HCT116 (cell line): ENCODE measurements at regions of chr16 and their contacts with region 1.

Region 1: GRCh38 chr16:85759631-85760419 is 8.9 kb upstream of the C16orf74 start:
- DNase-seq: no peak
- ATAC-seq: peak; percentile 97
- H3K4me3 ChIP-seq: no peak overlapping the region
- H3K27ac ChIP-seq: no peak overlapping the region
- H3K4me1 ChIP-seq: peaks cover 0 to 11% of the 10 kb centered on the region in 2 experiments; a peak in 1 of 4 replicates
- H3K27me3 ChIP-seq: peaks cover 6% of the 10 kb centered on the region; the same call in 1 of the 2 replicates
- CTCF ChIP-seq: peak; percentile 93 to 96 (median 94)
- POLR2A ChIP-seq: no peak
- RAD21 ChIP-seq: peak; percentile 96

Region 2: GRCh38 chr16:85659805-85660495 is 99.9 kb before region 1 on chr16:
- CTCF ChIA-PET with region 1: no interaction called
- POLR2A ChIA-PET with region 1: no interaction called
- RAD21 ChIA-PET with region 1: no interaction called
- intact Hi-C with region 1: loop called (anchors 2 kb)
- DNase-seq: peak; percentile 34
- ATAC-seq: peak; percentile 93
- H3K4me3 ChIP-seq: no peak overlapping the region
- H3K27ac ChIP-seq: no peak overlapping the region
- H3K4me1 ChIP-seq: 0 out of 4 replicates have a peak, but pooled peaks cover 0 to 3% of the 10 kb centered on the region in 2 experiments
- H3K27me3 ChIP-seq: no peaks in the 10 kb centered on the region
- CTCF ChIP-seq: peak; percentile 91 to 100 (median 100)
- POLR2A ChIP-seq: no peak
- RAD21 ChIP-seq: peak; percentile 87

Region 3: GRCh38 chr16:85675251-85675927 is 84.4 kb before region 1 on chr16:
- CTCF ChIA-PET with region 1: interaction called, 10 read pairs
- POLR2A ChIA-PET with region 1: no interaction called
- RAD21 ChIA-PET with region 1: no interaction called
- intact Hi-C with region 1: loop called (anchors 1 kb)
- DNase-seq: no peak
- ATAC-seq: peak; percentile 78
- H3K4me3 ChIP-seq: no peak overlapping the region
- H3K27ac ChIP-seq: no peak overlapping the region
- H3K4me1 ChIP-seq: no peaks in the 10 kb centered on the region
- H3K27me3 ChIP-seq: no peaks in the 10 kb centered on the region
- CTCF ChIP-seq: peak; percentile 64 to 65 (median 65); a peak in 5 of 6 replicates
- POLR2A ChIP-seq: no peak
- RAD21 ChIP-seq: peak; percentile 59